Activated CD8-positive, alpha-beta T cell treated with anti-CD3 and anti-CD28 coated beads for 36 hours (primary cell): ENCODE measurements at regions of chr11 and their contacts with region 1.

Region 1: DNA sequence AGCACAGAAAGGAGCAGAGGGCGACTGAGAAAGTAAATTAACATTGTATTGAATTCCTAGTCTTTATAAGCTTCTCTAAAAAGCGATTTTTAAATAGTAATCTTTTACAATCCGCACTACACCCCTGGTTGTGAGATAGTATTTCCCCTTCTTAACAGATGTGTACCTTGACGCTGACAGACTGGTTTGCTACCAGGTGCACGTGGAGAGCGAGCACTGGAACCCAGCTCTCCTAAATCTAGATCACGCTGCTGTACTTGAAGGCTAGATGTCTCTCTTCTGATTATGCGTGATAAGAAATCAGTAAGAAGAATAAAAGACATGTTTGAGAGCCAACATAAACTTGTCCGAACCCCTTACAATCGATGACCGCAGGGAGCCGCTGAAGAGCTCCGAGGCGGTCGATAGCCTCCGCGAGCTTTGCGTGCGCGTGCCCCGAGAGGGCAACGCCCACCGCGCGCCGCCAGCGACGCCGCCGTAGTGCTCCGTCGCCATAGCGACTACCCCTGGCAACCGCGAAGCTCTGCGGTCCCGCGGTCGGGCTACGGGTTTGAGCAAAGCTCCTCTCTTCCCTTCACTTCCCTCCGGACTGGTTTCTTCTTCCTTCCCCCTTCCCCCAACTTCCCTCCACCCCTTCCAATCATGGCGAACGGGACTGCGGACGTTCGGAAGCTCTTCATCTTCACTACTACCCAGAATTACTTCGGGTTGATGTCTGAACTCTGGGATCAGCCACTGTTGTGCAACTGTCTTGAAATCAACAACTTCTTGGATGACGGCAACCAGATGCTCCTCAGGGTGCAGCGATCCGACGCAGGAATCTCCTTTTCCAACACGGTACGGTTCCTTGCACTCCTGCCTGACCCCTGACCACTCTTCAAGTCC is at the start of gene DYNC2H1:
- DNase-seq: peak; percentile 88
- ATAC-seq: peak; percentile 98
- H3K4me3 Mint-ChIP-seq: peak within 1 kb of the TSS; percentile 79
- H3K27ac Mint-ChIP-seq: peak within 1 kb of the TSS; percentile 69
- H3K4me1 Mint-ChIP-seq: peaks cover 5% of the 10 kb centered on the region
- H3K27me3 Mint-ChIP-seq: peaks cover 1% of the 10 kb centered on the region
- CTCF ChIP-seq: peak; percentile 42
- total RNA-seq, gene DYNC2H1: 1.3 to 2.0 TPM

Region 2: GRCh38 chr11:103070142-103070541 is 39.0 kb before region 1 on chr11:
- CTCF ChIA-PET with region 1: no interaction called
- POLR2A ChIA-PET with region 1: no interaction called
- intact Hi-C with region 1: no loop called
- DNase-seq: no peak
- ATAC-seq: peak; percentile 73
- H3K4me3 Mint-ChIP-seq: no peak overlapping the region
- H3K27ac Mint-ChIP-seq: peak overlapping the region; percentile 80
- H3K4me1 Mint-ChIP-seq: peaks cover 52% of the 10 kb centered on the region
- H3K27me3 Mint-ChIP-seq: no peaks in the 10 kb centered on the region
- CTCF ChIP-seq: no peak

Region 3: DNA sequence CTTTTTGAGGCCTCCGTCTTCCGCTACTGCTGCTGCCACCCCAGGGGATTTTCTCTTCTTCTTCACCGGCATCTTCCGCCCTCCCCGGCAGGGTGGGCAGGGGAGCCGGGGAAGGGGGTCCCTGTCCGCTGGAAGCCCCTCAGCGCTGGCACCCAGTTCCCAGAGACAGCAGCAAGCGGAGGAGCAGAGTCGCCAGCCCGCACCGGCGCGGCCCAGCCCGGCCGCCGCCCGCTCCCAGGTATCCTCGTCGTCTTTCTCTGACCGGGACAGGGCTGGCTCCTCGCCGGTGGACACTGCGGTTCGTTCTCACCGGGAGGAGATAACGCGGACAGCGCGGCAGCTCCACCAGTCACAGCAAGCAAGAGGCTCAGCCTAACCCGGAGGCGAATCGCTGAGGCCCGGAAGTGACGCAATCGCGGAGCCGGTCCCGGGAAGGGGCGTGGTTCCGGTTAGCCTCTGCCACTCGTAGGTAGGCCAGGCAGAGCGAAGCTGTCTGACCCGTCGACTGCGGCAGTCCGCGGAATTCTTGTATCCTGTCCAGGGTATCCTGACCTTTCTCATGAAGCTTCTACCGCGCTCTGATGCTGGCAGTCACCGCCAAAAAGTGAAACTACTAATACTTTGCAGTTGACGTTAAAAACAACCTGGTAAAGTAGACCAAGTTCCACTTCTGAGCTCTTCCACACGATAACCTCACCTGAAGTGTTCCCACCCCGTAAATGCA is 17.2 kb before region 1 on chr11 and contains the start of gene DCUN1D5:
- CTCF ChIA-PET with region 1: interaction called, 27 read pairs
- POLR2A ChIA-PET with region 1: interaction called, 21 read pairs
- intact Hi-C with region 1: no loop called
- DNase-seq: peak; percentile 97
- ATAC-seq: peak; percentile 95
- H3K4me3 Mint-ChIP-seq: peak within 1 kb of the TSS; percentile 89
- H3K27ac Mint-ChIP-seq: peak within 1 kb of the TSS; percentile 93
- H3K4me1 Mint-ChIP-seq: peaks cover 26% of the 10 kb centered on the region
- H3K27me3 Mint-ChIP-seq: peaks cover 17% of the 10 kb centered on the region
- CTCF ChIP-seq: no peak
- total RNA-seq, gene DCUN1D5: 83.4 to 90.6 TPM

Region 4: DNA sequence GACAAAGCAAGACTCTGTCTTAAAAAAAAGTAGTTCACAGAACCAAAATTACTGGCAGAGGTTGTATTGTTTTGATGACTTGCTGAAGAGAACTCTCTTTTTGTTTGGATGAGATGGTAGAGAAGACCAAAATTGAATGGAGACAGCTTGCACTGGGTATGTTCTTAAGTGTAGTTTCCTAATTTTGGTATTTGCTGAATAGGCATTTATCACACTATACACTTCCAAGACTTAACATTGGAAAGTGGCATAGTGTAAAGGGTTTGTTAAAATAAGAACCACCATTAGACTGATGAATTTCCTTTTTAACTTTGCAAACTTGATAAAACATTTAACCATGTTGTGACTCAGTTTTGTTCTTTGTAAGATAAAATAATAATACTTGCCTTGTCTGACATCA is 11.9 kb before region 1 on chr11:
- CTCF ChIA-PET with region 1: interaction called, 27 read pairs
- POLR2A ChIA-PET with region 1: interaction called, 21 read pairs
- intact Hi-C with region 1: no loop called
- DNase-seq: no peak
- ATAC-seq: no peak
- H3K4me3 Mint-ChIP-seq: no peak overlapping the region
- H3K27ac Mint-ChIP-seq: no peak overlapping the region
- H3K4me1 Mint-ChIP-seq: peaks cover 11% of the 10 kb centered on the region
- H3K27me3 Mint-ChIP-seq: peaks cover 31% of the 10 kb centered on the region
- CTCF ChIP-seq: no peak

Region 5: GRCh38 chr11:103175461-103176129 is 66.4 kb after region 1 on chr11:
- CTCF ChIA-PET with region 1: no interaction called
- POLR2A ChIA-PET with region 1: no interaction called
- intact Hi-C with region 1: no loop called
- DNase-seq: no peak
- ATAC-seq: no peak
- H3K4me3 Mint-ChIP-seq: no peak overlapping the region
- H3K27ac Mint-ChIP-seq: no peak overlapping the region
- H3K4me1 Mint-ChIP-seq: no peaks in the 10 kb centered on the region
- H3K27me3 Mint-ChIP-seq: no peaks in the 10 kb centered on the region
- CTCF ChIP-seq: no peak

Region 6: DNA sequence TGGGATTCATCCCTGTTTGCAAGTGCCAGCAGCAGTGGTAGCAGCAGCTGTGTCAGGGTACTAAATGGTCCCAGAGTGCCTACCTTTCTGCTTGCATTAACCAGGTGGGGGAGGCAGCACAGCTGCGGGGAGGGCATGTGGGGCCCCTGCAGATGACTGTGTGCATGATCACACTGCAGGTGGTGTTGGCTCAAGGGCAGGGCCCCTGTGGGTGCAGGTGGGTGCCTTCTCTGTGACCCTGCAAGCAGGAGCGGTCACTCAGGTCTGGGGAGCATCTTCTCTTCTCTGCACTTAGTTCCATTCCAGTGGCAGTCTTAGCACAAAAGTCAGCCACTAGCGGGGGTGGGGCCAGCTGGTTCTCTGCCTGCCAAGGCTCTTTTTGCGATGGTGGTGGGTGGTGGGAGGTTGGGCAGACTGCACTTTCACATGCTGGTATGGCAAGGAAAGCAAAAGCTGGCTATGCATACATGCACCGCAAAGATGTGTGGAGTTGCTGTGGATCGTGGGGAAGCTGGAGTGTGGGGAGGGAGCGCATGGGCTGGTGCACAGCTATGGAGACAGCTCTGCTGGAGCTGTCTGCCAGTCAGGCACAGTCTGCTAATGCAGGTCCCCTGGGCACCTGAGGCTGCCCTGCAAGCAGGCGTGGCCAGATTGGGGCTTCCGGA is 157.1 kb after region 1 on chr11:
- CTCF ChIA-PET with region 1: no interaction called
- POLR2A ChIA-PET with region 1: no interaction called
- intact Hi-C with region 1: no loop called
- DNase-seq: no peak
- ATAC-seq: no peak
- H3K4me3 Mint-ChIP-seq: no peak overlapping the region
- H3K27ac Mint-ChIP-seq: no peak overlapping the region
- H3K4me1 Mint-ChIP-seq: no peaks in the 10 kb centered on the region
- H3K27me3 Mint-ChIP-seq: no peaks in the 10 kb centered on the region
- CTCF ChIP-seq: no peak